BJ (cell line): ENCODE measurements at regions of chr1 and their contacts with region 1.

Region 1: GRCh38 chr1:108125312-108126138 is 74.6 kb downstream of the SLC25A24 start:
- DNase-seq: peak; percentile 26
- H3K4me3 ChIP-seq: no peak overlapping the region
- H3K27me3 ChIP-seq: no peaks in the 10 kb centered on the region; the same call in 1 of the 2 replicates
- CTCF ChIP-seq: peak; percentile 96

Region 2: GRCh38 chr1:107782217-107782845 is 343.2 kb before region 1 on chr1:
- CTCF ChIA-PET with region 1: interaction called, 251 read pairs
- POLR2A ChIA-PET with region 1: interaction called, 3 read pairs
- DNase-seq: peak; percentile 3
- H3K4me3 ChIP-seq: no peak overlapping the region
- H3K27me3 ChIP-seq: no peaks in the 10 kb centered on the region
- CTCF ChIP-seq: peak; percentile 61

Region 3: GRCh38 chr1:107795441-107795840 is 330.1 kb before region 1 on chr1:
- CTCF ChIA-PET with region 1: interaction called, 16 read pairs
- POLR2A ChIA-PET with region 1: no interaction called
- DNase-seq: no peak
- H3K4me3 ChIP-seq: no peak overlapping the region
- H3K27me3 ChIP-seq: no peaks in the 10 kb centered on the region
- CTCF ChIP-seq: no peak

Region 4: DNA sequence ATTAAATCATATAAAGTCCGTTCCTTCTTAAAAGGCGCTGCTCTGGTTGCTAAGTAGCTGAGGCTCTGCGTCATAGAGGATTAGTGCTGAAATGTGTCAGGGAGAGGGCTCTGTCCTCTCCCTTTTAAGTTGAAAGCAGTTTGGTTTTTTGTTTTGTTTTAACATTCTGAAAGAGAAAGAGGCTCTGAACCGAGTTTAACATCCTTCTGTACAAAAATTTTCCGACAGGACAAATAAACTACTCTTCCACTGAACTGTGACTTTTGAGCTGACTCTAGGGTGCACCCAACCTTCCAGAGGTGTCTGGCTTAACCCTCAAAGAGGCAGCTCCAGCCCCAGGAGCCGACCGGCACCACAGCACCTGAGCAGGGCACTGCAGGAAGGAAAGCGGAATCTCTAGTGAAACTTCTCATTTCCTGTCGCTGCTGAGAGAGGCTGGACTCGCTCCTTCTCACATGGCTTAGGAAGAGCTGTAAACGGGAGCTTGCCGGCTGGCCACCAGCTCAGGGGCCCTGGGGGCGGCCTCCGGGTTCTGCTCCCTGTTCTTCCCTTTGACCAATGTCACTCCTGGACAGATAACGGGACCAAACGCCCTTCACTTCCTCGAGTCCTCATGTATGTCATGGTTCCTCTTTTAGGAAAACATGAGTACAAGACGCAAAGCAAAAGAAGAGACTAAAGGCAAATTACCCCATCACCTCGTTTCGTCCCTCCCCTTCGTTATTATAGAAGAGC is 161.8 kb before region 1 on chr1:
- CTCF ChIA-PET with region 1: no interaction called
- POLR2A ChIA-PET with region 1: no interaction called
- DNase-seq: no peak
- H3K4me3 ChIP-seq: no peak overlapping the region; the same call in 1 of the 2 replicates
- H3K27me3 ChIP-seq: peaks cover 24% of the 10 kb centered on the region
- CTCF ChIP-seq: no peak

Region 5: DNA sequence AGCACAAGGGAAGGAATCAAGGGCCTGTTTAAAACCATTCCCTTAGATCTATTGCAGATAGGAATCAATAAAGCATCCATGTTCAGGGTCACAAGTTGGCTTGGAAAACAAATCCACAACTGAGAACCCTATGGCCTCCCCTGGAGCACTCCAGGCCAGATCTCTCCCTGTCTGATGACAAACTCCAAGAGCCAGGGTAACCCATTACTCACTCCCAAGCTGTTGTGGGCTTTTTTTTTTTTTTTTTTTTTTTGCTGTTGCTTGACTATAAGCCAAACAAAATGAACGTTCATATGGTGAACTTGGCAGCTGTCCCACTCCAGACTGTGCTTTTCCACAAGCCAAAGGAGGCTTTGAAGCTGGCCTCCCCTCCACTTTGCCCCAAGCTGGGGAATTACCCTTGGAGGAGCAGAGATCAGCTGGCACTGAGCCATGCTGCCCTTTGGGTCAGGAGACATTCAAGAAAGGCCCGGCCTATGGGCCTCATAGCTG is 124.9 kb before region 1 on chr1:
- CTCF ChIA-PET with region 1: no interaction called
- POLR2A ChIA-PET with region 1: no interaction called
- DNase-seq: no peak
- H3K4me3 ChIP-seq: no peak overlapping the region
- H3K27me3 ChIP-seq: no peaks in the 10 kb centered on the region
- CTCF ChIP-seq: no peak

Region 6: DNA sequence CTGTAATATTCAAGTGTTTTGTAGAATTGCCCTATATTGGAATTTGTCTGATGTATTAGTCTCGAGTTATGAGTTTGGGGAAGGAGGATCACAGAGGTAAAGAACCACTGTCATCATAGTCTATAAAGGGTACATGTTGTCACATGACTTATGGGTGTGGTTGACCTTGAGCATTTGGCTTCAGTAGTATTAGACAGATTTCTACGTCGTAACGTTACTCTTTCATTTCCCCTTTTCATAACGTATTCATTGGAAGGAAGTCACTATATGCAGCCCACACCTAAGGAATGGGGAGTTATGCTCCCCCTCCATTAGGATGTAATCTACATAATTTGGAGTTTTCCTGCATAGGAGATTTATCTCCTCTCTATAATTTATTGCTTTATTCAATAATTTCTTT is 50.5 kb before region 1 on chr1:
- CTCF ChIA-PET with region 1: no interaction called
- POLR2A ChIA-PET with region 1: no interaction called
- DNase-seq: no peak
- H3K4me3 ChIP-seq: no peak overlapping the region
- H3K27me3 ChIP-seq: no peaks in the 10 kb centered on the region
- CTCF ChIP-seq: no peak

Region 7: GRCh38 chr1:108190707-108191411 is 65.3 kb after region 1 on chr1:
- CTCF ChIA-PET with region 1: no interaction called
- POLR2A ChIA-PET with region 1: no interaction called
- DNase-seq: no peak
- H3K4me3 ChIP-seq: no peak overlapping the region
- H3K27me3 ChIP-seq: no peaks in the 10 kb centered on the region
- CTCF ChIP-seq: no peak